ENCODE measurements at regions of chr17 and their contacts with region 1.

Region 1: GRCh38 chr17:43024407-43025289 is at the start of gene RND2:
- DNase-seq: peak; percentile 89 to 95 (median 94)
- H3K4me3 ChIP-seq: peak within 1 kb of the TSS; percentile 56
- H3K27ac ChIP-seq: peak within 1 kb of the TSS; percentile 34 to 78
- H3K4me1 ChIP-seq: peaks cover 8% of the 10 kb centered on the region
- H3K27me3 ChIP-seq: no peaks in the 10 kb centered on the region
- CTCF ChIP-seq: peak; percentile 46 to 91 (median 86)
- EP300 ChIP-seq: no peak
- POLR2A ChIP-seq: peak; percentile 79
- total RNA-seq, gene RND2: 2.5 to 11.6 (median 6.8) TPM

Region 2: GRCh38 chr17:42779936-42780850 is 244.5 kb before region 1 on chr17 and contains the start of gene WNK4:
- intact Hi-C with region 1: no loop called
- DNase-seq: peak in 3 of 5 donors; percentile 35 to 60 (median 59)
- H3K4me3 ChIP-seq: peak within 1 kb of the TSS; percentile 21
- H3K27ac ChIP-seq: peak within 1 kb of the TSS; percentile 20 to 45
- H3K4me1 ChIP-seq: peaks cover 4% of the 10 kb centered on the region
- H3K27me3 ChIP-seq: no peaks in the 10 kb centered on the region
- CTCF ChIP-seq: no peak
- EP300 ChIP-seq: no peak
- POLR2A ChIP-seq: no peak
- total RNA-seq, gene WNK4: 1.5 to 11.9 (median 3.4) TPM

Region 3: DNA sequence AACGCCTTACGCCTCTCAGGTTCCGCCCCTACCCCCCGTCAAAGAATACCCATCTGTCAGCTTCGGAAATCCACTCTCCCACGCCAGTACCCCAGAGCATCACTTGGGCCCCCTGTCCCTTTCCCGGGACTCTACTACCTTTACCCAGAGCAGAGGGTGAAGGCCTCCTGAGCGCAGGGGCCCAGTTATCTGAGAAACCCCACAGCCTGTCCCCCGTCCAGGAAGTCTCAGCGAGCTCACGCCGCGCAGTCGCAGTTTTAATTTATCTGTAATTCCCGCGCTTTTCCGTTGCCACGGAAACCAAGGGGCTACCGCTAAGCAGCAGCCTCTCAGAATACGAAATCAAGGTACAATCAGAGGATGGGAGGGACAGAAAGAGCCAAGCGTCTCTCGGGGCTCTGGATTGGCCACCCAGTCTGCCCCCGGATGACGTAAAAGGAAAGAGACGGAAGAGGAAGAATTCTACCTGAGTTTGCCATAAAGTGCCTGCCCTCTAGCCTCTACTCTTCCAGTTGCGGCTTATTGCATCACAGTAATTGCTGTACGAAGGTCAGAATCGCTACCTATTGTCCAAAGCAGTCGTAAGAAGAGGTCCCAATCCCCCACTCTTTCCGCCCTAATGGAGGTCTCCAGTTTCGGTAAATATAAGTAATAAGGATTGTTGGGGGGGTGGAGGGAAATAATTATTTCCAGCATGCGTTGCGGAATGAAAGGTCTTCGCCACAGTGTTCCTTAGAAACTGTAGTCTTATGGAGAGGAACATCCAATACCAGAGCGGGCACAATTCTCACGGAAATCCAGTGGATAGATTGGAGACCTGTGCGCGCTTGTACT is 100.7 kb after region 1 on chr17 and contains the start of gene BRCA1:
- intact Hi-C with region 1: loop called in 2 of 4 experiments (anchors 5 kb)
- DNase-seq: peak; percentile 89 to 94 (median 92)
- H3K4me3 ChIP-seq: peak within 1 kb of the TSS; percentile 56
- H3K27ac ChIP-seq: peak within 1 kb of the TSS; percentile 33 to 78
- H3K4me1 ChIP-seq: peaks cover 8% of the 10 kb centered on the region
- H3K27me3 ChIP-seq: no peaks in the 10 kb centered on the region
- CTCF ChIP-seq: no peak
- EP300 ChIP-seq: no peak
- POLR2A ChIP-seq: peak; percentile 41
- total RNA-seq, gene BRCA1: 2.5 to 5.4 (median 4.9) TPM

Region 4: DNA sequence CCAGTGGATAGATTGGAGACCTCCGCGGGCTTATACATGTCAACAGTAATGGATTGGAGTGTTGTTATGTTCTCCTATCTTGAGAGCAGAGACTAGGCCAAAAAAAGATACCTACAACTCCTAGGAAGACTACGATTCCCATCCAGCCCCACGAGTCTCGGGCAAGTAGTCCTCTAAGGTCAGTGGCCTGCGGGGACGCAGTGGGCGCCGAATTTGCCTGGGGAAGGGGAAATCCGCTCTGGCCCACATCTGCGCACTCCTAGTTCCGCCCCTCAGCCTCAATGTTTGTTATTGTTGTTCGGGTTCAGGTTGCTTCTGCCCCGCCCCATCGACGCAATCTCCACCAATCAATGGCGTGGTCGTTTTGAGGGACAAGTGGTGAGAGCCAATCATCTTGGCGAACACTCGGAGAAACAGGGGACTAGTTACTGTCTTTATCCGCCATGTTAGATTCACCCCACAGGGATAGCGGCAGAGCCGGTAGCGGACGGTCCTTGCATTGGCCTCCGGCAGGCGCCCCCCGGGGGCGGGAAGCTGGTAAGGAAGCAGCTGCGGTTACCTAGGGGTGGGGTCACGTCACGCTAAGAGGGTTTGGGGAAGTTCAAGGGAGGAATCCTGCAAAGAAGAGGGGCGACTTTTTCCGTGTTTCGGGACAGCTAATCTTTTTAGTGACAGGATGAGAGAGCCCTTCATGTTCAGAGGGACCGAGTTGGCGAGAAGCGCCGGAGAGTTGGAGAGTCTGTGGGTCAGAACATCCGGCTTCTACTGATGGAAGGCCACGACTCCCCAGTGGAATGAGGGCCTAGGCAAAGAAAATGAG is 146.3 kb after region 1 on chr17 and contains the start of gene NBR1:
- intact Hi-C with region 1: loop called in 3 of 4 experiments (anchors 5 kb)
- DNase-seq: peak; percentile 94 to 98 (median 97)
- H3K4me3 ChIP-seq: peak within 1 kb of the TSS; percentile 85
- H3K27ac ChIP-seq: peak within 1 kb of the TSS; percentile 88 to 99
- H3K4me1 ChIP-seq: peaks cover 8% of the 10 kb centered on the region
- H3K27me3 ChIP-seq: no peaks in the 10 kb centered on the region
- CTCF ChIP-seq: peak in 2 of 3 donors; percentile 45 to 54
- EP300 ChIP-seq: no peak
- POLR2A ChIP-seq: peak; percentile 78
- total RNA-seq, gene NBR1: 58.2 to 89.1 (median 78.6) TPM

Region 5: DNA sequence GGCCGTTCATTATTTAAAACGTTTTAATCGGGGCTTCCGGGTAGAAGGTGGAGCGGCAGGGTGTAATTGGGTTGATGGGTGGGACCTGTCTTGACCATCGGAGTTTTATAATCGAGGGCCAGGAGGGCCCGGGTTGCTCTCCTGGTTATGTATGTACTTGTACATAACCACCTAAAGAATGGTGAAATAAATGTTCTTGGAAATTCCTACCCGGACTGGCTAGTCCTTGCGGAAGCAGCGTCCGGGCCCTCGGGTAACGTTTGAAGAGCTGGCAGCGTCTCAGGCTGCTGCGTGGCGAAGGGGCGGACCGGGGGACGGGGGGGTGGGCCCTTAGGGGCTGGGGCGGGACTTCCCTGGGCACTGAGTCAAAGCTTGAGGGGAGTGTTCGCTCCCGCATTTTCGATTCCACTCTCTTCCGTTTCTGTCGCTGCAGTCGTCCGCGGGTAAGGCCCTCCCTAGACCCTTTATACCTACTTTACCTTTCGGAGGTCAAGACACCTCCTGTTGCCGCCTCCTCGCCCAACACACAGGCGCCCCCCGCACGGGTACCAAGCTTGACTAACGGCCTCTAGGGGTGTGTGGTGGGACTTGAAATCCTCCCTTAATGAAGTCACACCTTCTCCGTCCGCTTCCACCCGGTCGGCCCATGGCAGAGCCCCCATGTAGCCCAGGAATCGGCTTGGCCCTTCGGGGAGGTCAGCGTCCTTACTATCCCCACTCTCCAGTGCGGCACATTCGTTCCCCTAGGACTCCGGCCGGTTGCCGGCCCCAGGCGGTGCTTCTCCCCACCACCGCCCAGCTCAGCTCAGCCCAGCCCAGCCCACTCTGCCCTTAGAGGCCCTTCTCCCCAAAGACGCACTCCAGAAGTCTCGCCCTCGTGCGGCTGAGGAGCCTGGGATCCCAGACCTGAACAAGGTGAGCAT is 187.1 kb after region 1 on chr17 and contains the start of gene TMEM106A:
- intact Hi-C with region 1: loop called in 1 of 4 experiments (anchors 10 kb)
- DNase-seq: peak; percentile 83 to 89 (median 86)
- H3K4me3 ChIP-seq: peak within 1 kb of the TSS; percentile 54
- H3K27ac ChIP-seq: peak within 1 kb of the TSS; percentile 60 to 72
- H3K4me1 ChIP-seq: peaks cover 5% of the 10 kb centered on the region
- H3K27me3 ChIP-seq: no peaks in the 10 kb centered on the region
- CTCF ChIP-seq: peak in 2 of 3 donors; percentile 48 to 51
- EP300 ChIP-seq: no peak
- POLR2A ChIP-seq: no peak
- total RNA-seq, gene TMEM106A: 1.5 to 23.4 (median 15.0) TPM

Region 6: GRCh38 chr17:43309505-43310332 is 285.1 kb after region 1 on chr17:
- intact Hi-C with region 1: loop called in 2 of 4 experiments (anchors 5 to 10 kb)
- DNase-seq: peak in 1 of 5 donors; percentile 16
- H3K4me3 ChIP-seq: no peak overlapping the region
- H3K27ac ChIP-seq: no peak overlapping the region
- H3K4me1 ChIP-seq: no peaks in the 10 kb centered on the region
- H3K27me3 ChIP-seq: no peaks in the 10 kb centered on the region
- CTCF ChIP-seq: no peak
- EP300 ChIP-seq: no peak
- POLR2A ChIP-seq: no peak

Region 7: GRCh38 chr17:43316522-43317142 is 292.0 kb after region 1 on chr17:
- intact Hi-C with region 1: loop called in 1 of 4 experiments (anchors 10 kb)
- DNase-seq: no peak
- H3K4me3 ChIP-seq: no peak overlapping the region
- H3K27ac ChIP-seq: no peak overlapping the region
- H3K4me1 ChIP-seq: no peaks in the 10 kb centered on the region
- H3K27me3 ChIP-seq: no peaks in the 10 kb centered on the region
- CTCF ChIP-seq: no peak
- EP300 ChIP-seq: no peak
- POLR2A ChIP-seq: no peak